Activated CD4-positive, alpha-beta T cell treated with anti-CD3 and anti-CD28 coated beads for 36 hours (primary cell): ENCODE measurements at regions of chr1 and their contacts with region 1.

Region 1: GRCh38 chr1:236808564-236809130 is 13.6 kb downstream of the MTR start:
- DNase-seq: no peak
- ATAC-seq: no peak
- H3K4me3 Mint-ChIP-seq: no peak overlapping the region
- H3K27ac Mint-ChIP-seq: no peak overlapping the region
- H3K4me1 Mint-ChIP-seq: peaks cover 27% of the 10 kb centered on the region
- H3K27me3 Mint-ChIP-seq: no peaks in the 10 kb centered on the region

Region 2: GRCh38 chr1:236113324-236114032 is 695.2 kb before region 1 on chr1:
- CTCF ChIA-PET with region 1: no interaction called
- POLR2A ChIA-PET with region 1: no interaction called
- intact Hi-C with region 1: loop called in 1 of 2 experiments (anchors 10 kb)
- DNase-seq: no peak
- ATAC-seq: no peak
- H3K4me3 Mint-ChIP-seq: no peak overlapping the region
- H3K27ac Mint-ChIP-seq: no peak overlapping the region
- H3K4me1 Mint-ChIP-seq: no peaks in the 10 kb centered on the region
- H3K27me3 Mint-ChIP-seq: peaks cover 1% of the 10 kb centered on the region